Endothelial cell of umbilical vein (primary cell): ENCODE measurements at regions of chr3 and their contacts with region 1.

Region 1: DNA sequence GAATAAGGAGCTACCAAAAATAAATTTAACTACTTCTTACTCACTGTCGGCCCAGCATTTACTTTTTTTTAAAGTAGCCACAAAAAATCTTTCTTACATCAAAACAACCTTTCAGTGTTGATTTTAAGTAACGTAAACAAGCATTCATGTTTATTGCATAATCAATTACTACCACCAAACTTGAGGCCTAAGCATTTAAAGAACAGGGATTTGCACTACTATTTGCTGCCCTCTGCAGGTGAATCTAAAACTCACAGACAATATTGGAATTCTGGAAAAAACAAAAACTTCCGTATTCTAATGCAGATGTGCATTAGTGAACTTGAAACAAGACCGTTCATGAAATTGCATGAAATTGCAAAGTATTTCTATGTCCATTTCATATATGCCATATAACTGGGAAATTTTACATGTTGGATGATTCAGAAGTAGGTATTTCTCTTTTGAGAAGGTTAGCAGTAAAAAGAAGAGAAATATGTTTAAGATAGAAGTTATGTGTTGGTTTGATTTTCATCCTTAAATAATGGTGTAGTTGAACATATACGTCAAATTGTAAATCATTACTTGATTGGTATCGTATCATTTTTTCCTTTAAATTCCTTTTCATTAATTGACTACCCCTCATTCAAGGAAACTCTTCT is 55.6 kb downstream of the CGGBP1 start:
- DNase-seq: peak; percentile 64
- H3K4me3 ChIP-seq: no peak overlapping the region
- H3K27ac ChIP-seq: no peak overlapping the region
- H3K4me1 ChIP-seq: peaks cover 2% of the 10 kb centered on the region
- H3K27me3 ChIP-seq: peaks cover 0 to 7% of the 10 kb centered on the region in 2 experiments
- CTCF ChIP-seq: peak; percentile 55
- POLR2A ChIP-seq: no peak

Region 2: GRCh38 chr3:87298111-87298718 is 705.0 kb before region 1 on chr3:
- CTCF ChIA-PET with region 1: interaction called, 49 read pairs
- POLR2A ChIA-PET with region 1: no interaction called
- dilution Hi-C with region 1: no loop called
- intact Hi-C with region 1: loop called (anchors 1 kb)
- DNase-seq: peak; percentile 59
- H3K4me3 ChIP-seq: no peak overlapping the region
- H3K27ac ChIP-seq: no peak overlapping the region
- H3K4me1 ChIP-seq: no peaks in the 10 kb centered on the region
- H3K27me3 ChIP-seq: no peaks in the 10 kb centered on the region
- CTCF ChIP-seq: peak; percentile 25 to 35
- POLR2A ChIP-seq: no peak

Region 3: GRCh38 chr3:87771341-87772192 is 231.7 kb before region 1 on chr3:
- CTCF ChIA-PET with region 1: interaction called, 67 read pairs
- POLR2A ChIA-PET with region 1: no interaction called
- dilution Hi-C with region 1: no loop called
- intact Hi-C with region 1: loop called (anchors 1 kb)
- DNase-seq: peak; percentile 52
- H3K4me3 ChIP-seq: no peak overlapping the region
- H3K27ac ChIP-seq: no peak overlapping the region
- H3K4me1 ChIP-seq: no peaks in the 10 kb centered on the region
- H3K27me3 ChIP-seq: peaks cover 0 to 3% of the 10 kb centered on the region in 2 experiments
- CTCF ChIP-seq: peak; percentile 76 to 79
- POLR2A ChIP-seq: no peak

Region 4: DNA sequence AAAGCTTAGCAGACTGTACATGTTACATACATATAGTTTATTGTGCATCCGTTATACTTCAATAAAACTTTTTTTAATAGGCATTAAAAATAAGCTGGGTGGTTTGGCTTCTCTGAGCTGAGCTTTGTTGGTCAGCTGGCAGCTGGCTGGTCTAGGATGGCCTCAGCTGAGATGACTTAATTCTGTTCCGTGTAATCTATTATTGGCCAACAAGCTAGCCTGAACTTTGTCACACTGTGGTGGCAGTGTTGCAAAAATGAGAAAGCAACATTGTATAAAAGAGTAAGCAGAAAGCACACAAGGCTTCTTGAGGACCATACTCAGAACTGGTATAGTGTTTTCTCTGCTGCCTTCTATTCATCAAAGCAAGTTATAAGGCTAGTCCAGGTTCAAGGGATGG is 10.4 kb after region 1 on chr3:
- CTCF ChIA-PET with region 1: interaction called, 21 read pairs
- POLR2A ChIA-PET with region 1: no interaction called
- dilution Hi-C with region 1: no loop called
- intact Hi-C with region 1: no loop called
- DNase-seq: no peak
- H3K4me3 ChIP-seq: no peak overlapping the region
- H3K27ac ChIP-seq: no peak overlapping the region
- H3K4me1 ChIP-seq: no peaks in the 10 kb centered on the region
- H3K27me3 ChIP-seq: no peaks in the 10 kb centered on the region
- CTCF ChIP-seq: no peak
- POLR2A ChIP-seq: no peak

Region 5: DNA sequence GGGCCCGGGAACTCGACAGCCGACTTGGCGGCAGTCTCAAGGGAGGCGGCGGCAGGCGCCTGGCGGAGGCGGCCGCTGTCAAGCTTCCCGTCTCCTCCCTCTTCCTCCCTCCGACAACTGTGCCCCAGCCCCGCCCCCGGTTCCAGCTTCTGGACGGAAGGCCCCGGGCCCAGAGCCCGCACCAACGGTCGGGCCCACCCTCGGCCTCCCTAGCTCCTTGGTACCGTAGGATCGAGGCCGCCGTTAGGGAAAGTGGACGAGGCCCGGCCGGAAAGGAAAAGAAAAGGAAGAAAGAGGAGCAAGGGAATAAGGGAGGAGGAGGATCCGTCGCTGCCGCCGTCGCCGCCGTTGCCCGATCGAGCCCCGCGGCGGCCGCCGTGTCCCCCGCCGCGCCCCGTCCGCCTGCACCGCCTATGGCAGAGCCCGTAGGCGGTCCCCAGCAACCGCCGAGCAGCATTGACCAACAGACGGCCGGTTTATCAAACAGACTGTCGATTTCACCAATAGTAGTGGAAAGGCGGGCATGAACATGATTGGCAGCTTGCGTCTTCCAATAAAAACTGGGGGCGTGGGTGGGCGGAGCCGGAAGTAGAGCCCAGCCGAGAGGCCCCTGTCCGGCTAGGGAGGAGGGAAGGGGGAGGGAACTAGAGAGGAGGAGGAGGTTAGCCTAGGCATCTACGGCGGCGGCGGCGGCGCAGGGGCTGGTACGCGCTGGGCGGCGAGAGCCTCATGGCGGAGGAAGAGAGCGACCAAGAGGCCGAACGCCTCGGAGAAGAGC is 55.5 kb after region 1 on chr3 and contains the starts of genes CGGBP1 and ZNF654:
- CTCF ChIA-PET with region 1: interaction called, 30 read pairs
- POLR2A ChIA-PET with region 1: no interaction called
- dilution Hi-C with region 1: no loop called
- intact Hi-C with region 1: no loop called
- DNase-seq: peak; percentile 99
- H3K4me3 ChIP-seq: peak within 1 kb of the TSS; percentile 77 to 99 (median 98)
- H3K27ac ChIP-seq: peak within 1 kb of the TSS; percentile 94
- H3K4me1 ChIP-seq: peaks cover 29% of the 10 kb centered on the region
- H3K27me3 ChIP-seq: no peaks in the 10 kb centered on the region
- CTCF ChIP-seq: no peak
- POLR2A ChIP-seq: peak; percentile 79
- total RNA-seq, gene CGGBP1: 69.4 and 69.7 TPM in 2 replicates
- total RNA-seq, gene ZNF654: 14.6 and 14.8 TPM in 2 replicates